Activated naive CD4-positive, alpha-beta T cell treated with anti-CD3 and anti-CD28 coated beads for 36 hours (primary cell): ENCODE measurements at regions of chr22 and their contacts with region 1.

Region 1: DNA sequence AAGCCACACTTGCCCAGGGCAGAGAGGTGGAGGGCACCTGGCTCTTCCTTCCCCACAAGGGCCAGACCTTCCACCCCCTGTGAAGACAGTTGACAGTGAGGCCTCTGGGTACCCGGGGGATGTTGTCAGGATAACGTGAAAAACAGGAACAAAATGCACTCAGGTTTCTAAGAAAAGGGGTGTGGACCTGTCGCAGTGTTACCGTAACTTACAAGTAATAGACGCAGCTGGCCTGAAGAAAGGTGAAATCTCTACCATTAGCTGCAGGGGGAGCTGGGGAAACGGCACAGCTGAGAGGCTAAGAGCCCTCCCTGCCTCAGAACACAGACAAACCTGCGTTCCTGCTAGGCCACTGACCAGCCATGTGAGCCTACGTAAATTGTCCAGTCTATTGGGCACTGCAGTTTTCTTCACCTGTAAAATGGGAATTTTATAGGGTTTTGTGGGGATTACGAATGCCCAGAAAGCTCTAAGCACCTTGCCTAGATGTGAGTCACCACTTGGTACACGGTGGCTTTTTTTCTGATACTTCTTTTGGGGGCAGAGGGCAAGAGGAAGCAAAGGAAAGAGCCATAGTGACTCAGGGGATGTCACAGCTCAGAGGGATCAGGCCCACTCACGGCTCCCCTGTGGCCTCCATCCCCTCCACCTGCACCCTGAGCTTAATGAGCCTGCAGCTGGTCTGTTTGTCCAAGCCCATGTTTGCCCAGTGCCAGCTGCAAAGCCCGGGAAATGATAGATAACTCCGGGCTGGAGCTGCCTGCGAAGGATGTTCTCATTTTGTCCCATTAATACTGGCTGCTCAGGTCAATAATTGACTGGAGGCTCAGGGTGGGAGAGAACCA is 18.4 kb upstream of the CABP7 start:
- DNase-seq: peak; percentile 61
- H3K4me3 Mint-ChIP-seq: no peak overlapping the region
- H3K27ac Mint-ChIP-seq: peak overlapping the region; percentile 7
- H3K4me1 Mint-ChIP-seq: peaks cover 20% of the 10 kb centered on the region
- H3K27me3 Mint-ChIP-seq: no peaks in the 10 kb centered on the region

Region 2: GRCh38 chr22:29480512-29481264 is 220.7 kb before region 1 on chr22:
- CTCF ChIA-PET with region 1: no interaction called
- intact Hi-C with region 1: no loop called
- DNase-seq: peak; percentile 22
- H3K4me3 Mint-ChIP-seq: peak overlapping the region; percentile 49
- H3K27ac Mint-ChIP-seq: no peak overlapping the region
- H3K4me1 Mint-ChIP-seq: peaks cover 12% of the 10 kb centered on the region
- H3K27me3 Mint-ChIP-seq: peaks cover 42% of the 10 kb centered on the region

Region 3: GRCh38 chr22:29658176-29658575 is 43.2 kb before region 1 on chr22:
- CTCF ChIA-PET with region 1: no interaction called
- intact Hi-C with region 1: no loop called
- DNase-seq: no peak
- H3K4me3 Mint-ChIP-seq: no peak overlapping the region
- H3K27ac Mint-ChIP-seq: no peak overlapping the region
- H3K4me1 Mint-ChIP-seq: no peaks in the 10 kb centered on the region
- H3K27me3 Mint-ChIP-seq: no peaks in the 10 kb centered on the region

Region 4: DNA sequence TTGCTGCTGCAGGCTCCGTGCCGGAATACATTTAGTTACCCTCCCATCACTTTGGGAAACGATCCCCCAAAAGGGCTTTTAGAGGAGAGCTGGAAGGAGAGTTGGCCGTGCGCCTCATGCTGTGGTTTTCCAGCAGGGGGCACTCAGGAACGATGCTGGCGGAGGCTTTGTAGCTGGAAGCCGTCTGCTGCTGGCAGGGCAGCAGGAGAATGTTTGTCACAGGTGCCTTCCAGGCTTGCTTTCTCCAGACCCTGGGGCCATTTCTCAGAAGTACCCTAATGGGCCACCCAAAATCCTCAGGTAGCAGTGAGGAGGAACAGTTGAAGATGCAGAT is 11.5 kb before region 1 on chr22:
- CTCF ChIA-PET with region 1: interaction called, 12 read pairs
- intact Hi-C with region 1: no loop called
- DNase-seq: peak; percentile 70
- H3K4me3 Mint-ChIP-seq: no peak overlapping the region
- H3K27ac Mint-ChIP-seq: no peak overlapping the region
- H3K4me1 Mint-ChIP-seq: peaks cover 1% of the 10 kb centered on the region
- H3K27me3 Mint-ChIP-seq: no peaks in the 10 kb centered on the region

Region 5: DNA sequence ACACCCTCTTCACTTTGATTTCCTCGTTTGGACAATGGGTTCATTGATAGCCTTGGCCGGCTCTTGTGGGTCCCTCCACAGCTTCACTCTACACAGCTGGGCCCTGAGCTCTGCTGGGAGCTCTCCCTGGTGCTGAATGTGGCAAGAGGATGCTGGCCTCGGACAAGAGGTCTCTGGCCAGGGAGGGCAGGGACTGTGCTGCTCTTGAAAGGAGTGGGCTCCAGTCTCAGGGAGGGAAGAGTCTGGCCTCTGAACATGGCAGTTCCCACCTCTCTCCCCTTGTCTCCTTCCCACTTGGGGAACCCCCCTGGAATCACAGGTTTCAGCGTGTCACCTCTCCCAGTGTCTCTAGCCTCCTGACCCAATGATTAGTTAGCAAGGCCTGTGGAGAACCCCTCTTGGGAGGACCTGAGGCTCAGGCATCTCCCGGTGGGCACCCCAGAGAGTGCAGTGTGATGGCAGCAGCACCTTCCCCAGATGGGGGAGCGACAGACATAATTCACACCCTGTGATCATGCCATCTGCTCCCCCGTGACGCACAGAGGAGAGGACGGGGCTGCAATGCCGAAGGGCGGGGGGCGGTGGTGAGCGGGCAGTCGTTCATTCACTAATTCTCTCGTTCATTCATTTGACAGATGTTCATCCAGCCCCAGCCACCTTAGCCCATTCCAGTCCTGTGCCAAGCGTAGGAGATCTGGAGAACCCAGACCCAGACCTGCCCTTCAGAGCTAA is 15.6 kb after region 1 on chr22:
- CTCF ChIA-PET with region 1: no interaction called
- intact Hi-C with region 1: no loop called
- DNase-seq: peak; percentile 47
- H3K4me3 Mint-ChIP-seq: no peak overlapping the region
- H3K27ac Mint-ChIP-seq: no peak overlapping the region
- H3K4me1 Mint-ChIP-seq: peaks cover 4% of the 10 kb centered on the region
- H3K27me3 Mint-ChIP-seq: peaks cover 40% of the 10 kb centered on the region